Right lobe of liver (tissue), 6 donors: ENCODE measurements at regions of chr1 and their contacts with region 1.

Region 1: DNA sequence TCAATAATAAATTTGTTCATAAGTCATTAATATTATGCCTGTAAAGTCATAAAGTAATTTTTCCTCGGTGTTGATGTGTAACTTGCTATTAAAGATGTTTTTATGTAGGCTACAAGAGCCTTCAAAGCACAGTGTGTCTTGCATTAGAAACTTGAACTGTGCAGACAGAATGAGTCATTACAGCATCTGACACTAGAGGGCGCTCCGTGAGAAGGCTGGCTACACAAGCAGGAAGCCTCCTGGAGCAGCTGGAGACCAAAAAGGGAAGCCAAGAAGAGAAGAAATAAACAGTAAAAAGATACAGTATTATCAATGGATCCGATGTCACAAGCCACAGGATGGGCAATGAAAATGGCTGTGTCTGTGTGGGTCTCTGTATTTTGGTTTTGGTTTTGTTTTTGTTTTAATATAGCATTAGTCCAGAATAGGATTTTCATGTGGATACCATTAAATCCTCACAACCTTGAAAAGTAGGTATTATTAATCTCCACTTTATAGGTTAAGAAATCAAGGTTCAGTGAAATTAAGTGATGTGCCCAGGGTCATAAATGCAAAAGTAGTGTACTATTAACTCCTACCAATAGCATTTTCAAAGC is 16.1 kb upstream of the LRRC8D start:
- DNase-seq: peak; percentile 82 to 88 (median 84)
- ATAC-seq: peak; percentile 95 to 99 (median 96)
- H3K4me3 ChIP-seq: no peak overlapping the region
- H3K27ac ChIP-seq: no peak overlapping the region
- H3K4me1 ChIP-seq: peaks cover 0 to 8% (median 0%) of the 10 kb centered on the region in 4 donors
- H3K27me3 ChIP-seq: no peaks in the 10 kb centered on the region
- CTCF ChIP-seq: peak; percentile 88 to 94 (median 90)
- POLR2A ChIP-seq: no peak

Region 2: GRCh38 chr1:89331890-89332289 is 472.9 kb before region 1 on chr1:
- intact Hi-C with region 1: no loop called
- DNase-seq: no peak
- ATAC-seq: no peak
- H3K4me3 ChIP-seq: no peak overlapping the region
- H3K27ac ChIP-seq: no peak overlapping the region
- H3K4me1 ChIP-seq: no peaks in the 10 kb centered on the region
- H3K27me3 ChIP-seq: no peaks in the 10 kb centered on the region
- CTCF ChIP-seq: no peak
- POLR2A ChIP-seq: no peak

Region 3: GRCh38 chr1:89904219-89904980 is 99.7 kb after region 1 on chr1:
- intact Hi-C with region 1: no loop called
- DNase-seq: no peak
- ATAC-seq: peak in 3 of 4 donors; percentile 10 to 44 (median 13)
- H3K4me3 ChIP-seq: no peak overlapping the region
- H3K27ac ChIP-seq: peak overlapping the region in 1 of 3 donors; percentile 34
- H3K4me1 ChIP-seq: peaks cover 0 to 32% (median 18%) of the 10 kb centered on the region in 4 donors
- H3K27me3 ChIP-seq: no peaks in the 10 kb centered on the region
- CTCF ChIP-seq: no peak
- POLR2A ChIP-seq: no peak

Region 4: DNA sequence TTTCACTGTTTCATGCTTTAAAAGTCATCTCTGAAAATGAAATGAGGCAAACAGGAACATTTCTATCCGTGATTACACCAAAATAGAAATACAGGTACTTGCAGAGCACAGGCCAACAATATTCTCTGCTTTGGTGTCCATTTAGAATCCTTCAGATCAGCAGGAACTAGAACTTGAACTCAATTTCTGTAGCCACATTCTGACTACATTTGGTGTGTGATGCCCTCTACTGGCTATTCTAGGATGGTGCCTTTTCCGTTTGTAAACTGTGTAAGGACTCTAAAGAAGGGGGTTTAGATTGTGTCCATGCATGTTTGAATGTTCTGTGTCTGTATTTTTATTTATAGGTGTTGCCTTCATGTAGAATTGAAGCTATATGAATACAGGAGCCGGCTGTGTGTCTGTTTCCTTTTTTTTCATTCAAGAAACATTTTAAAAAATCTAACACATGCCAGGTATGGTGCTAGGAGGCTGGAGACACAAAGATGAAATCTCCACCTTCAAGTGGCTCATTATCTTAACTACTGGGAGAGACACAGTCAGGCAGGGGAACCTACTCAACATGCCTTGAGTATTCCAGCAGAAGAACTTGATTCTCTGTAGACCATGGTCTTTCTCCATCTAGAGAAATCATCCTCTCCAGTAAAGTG is 182.6 kb after region 1 on chr1:
- intact Hi-C with region 1: loop called (anchors 10 kb)
- DNase-seq: no peak
- ATAC-seq: peak; percentile 91 to 95 (median 94)
- H3K4me3 ChIP-seq: no peak overlapping the region
- H3K27ac ChIP-seq: no peak overlapping the region
- H3K4me1 ChIP-seq: peaks cover 0 to 11% (median 0%) of the 10 kb centered on the region in 4 donors
- H3K27me3 ChIP-seq: no peaks in the 10 kb centered on the region
- CTCF ChIP-seq: peak; percentile 86 to 93 (median 89)
- POLR2A ChIP-seq: no peak